Endothelial cell of umbilical vein (primary cell): ENCODE measurements at regions of chr9 and their contacts with region 1.

Region 1: GRCh38 chr9:35829084-35829763 is at the start of gene TMEM8B:
- DNase-seq: peak; percentile 91
- H3K4me3 ChIP-seq: peak within 1 kb of the TSS; percentile 54 to 60 (median 60)
- H3K27ac ChIP-seq: peak within 1 kb of the TSS; percentile 34
- H3K4me1 ChIP-seq: peaks cover 9% of the 10 kb centered on the region
- H3K27me3 ChIP-seq: no peaks in the 10 kb centered on the region
- CTCF ChIP-seq: no peak
- POLR2A ChIP-seq: peak; percentile 57
- total RNA-seq, gene TMEM8B: 2.5 and 2.9 TPM in 2 replicates

Region 2: DNA sequence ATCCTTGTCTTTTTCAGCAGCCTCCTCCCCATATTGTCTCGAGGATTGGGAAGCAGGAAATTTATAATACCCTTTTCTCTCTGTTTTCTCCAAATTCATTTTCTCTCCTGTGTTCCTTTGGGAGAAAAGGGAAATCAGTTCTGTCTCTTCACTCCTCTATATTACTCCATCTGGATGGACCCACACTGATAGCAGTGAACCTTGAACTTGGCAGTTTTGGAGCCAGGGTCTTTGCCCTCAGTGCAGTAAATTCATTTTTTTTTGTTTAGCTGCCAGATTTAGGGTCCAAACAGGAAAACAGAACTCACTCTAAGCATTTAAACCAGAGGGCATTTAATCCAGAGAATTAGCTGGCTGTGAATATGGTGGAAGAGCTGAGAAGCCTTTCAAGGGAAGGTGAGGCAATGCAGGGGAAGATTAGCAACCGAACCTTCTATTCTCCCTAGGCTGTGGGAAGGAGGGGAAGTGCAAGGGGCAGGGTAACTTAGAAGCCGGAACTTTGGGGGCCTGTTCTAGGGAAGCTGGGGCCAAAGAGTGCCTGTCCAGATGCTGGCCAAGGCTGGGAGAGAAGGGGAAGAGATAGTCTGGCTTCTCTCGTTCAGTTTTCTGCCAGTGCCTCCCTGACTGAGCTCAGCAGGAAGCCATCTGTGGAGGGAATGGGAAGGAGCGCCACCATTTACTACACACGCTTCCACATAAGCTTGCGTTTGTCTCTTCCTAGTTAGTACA is 54.2 kb before region 1 on chr9:
- CTCF ChIA-PET with region 1: interaction called, 10 read pairs
- POLR2A ChIA-PET with region 1: no interaction called
- dilution Hi-C with region 1: no loop called
- intact Hi-C with region 1: no loop called
- DNase-seq: peak; percentile 79
- H3K4me3 ChIP-seq: peak overlapping the region in 1 of 3 experiments; percentile 13
- H3K27ac ChIP-seq: peak overlapping the region; percentile 52
- H3K4me1 ChIP-seq: peaks cover 36% of the 10 kb centered on the region
- H3K27me3 ChIP-seq: no peaks in the 10 kb centered on the region
- CTCF ChIP-seq: no peak
- POLR2A ChIP-seq: no peak

Region 3: DNA sequence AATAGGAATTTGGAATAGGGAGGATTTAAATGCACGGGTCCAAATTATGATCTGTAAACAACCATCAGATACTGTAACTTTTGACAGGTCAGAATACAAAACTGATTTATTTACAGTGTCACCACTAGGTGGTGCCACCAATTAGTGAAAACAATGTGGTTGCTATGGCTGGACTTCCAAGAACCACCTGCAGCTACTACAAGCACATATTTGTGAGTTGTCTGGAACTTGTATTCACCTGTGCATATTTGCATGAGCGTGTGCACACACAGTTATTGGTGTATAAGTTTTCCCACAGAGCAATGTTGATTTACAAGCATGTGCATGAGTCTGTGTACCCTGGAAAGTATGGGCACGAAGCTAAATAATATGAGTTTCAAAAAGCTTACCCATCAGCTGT is 73.8 kb after region 1 on chr9:
- CTCF ChIA-PET with region 1: interaction called, 11 read pairs
- POLR2A ChIA-PET with region 1: no interaction called
- dilution Hi-C with region 1: no loop called
- intact Hi-C with region 1: no loop called
- DNase-seq: peak; percentile 67
- H3K4me3 ChIP-seq: no peak overlapping the region
- H3K27ac ChIP-seq: no peak overlapping the region
- H3K4me1 ChIP-seq: peaks cover 35% of the 10 kb centered on the region
- H3K27me3 ChIP-seq: no peaks in the 10 kb centered on the region
- CTCF ChIP-seq: peak; percentile 48 to 62
- POLR2A ChIP-seq: no peak

Region 4: GRCh38 chr9:35945341-35946018 is 116.3 kb after region 1 on chr9:
- CTCF ChIA-PET with region 1: interaction called, 9 read pairs
- POLR2A ChIA-PET with region 1: no interaction called
- dilution Hi-C with region 1: no loop called
- intact Hi-C with region 1: loop called (anchors 5 kb)
- DNase-seq: peak; percentile 67
- H3K4me3 ChIP-seq: peak overlapping the region in 1 of 3 experiments; percentile 33
- H3K27ac ChIP-seq: peak overlapping the region; percentile 16
- H3K4me1 ChIP-seq: peaks cover 22% of the 10 kb centered on the region
- H3K27me3 ChIP-seq: no peaks in the 10 kb centered on the region
- CTCF ChIP-seq: peak; percentile 83 to 85
- POLR2A ChIP-seq: no peak